CD8-positive, alpha-beta T cell (primary cell): ENCODE measurements at regions of chr16 and their contacts with region 1.

Region 1: DNA sequence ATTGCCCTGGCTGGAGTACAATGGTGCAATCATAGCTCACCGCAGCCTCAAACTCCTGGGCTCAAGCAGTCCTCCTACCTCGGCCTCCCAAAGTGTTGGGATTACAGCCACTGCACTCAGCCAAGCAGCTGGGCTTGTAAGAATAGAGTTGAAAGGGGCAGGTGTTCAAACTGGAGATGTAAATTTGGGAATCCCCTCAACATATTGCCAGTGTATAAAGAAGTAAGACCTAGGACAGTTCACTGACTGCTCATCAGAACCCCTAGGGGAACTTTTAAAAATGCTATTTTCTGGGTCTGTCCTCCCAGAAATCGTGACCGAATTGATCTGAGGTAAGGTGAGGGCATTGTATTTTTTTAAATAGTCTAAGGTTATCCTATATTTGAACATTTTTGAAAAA is 8.9 kb upstream of the DNAJA2 start:
- DNase-seq: no peak
- ATAC-seq: no peak
- H3K4me3 ChIP-seq: no peak overlapping the region
- H3K4me3 Mint-ChIP-seq: no peak overlapping the region
- H3K27ac ChIP-seq: no peak overlapping the region
- H3K27ac Mint-ChIP-seq: no peak overlapping the region
- H3K4me1 ChIP-seq: no peaks in the 10 kb centered on the region
- H3K4me1 Mint-ChIP-seq: no peaks in the 10 kb centered on the region
- H3K27me3 ChIP-seq: no peaks in the 10 kb centered on the region
- H3K27me3 Mint-ChIP-seq: no peaks in the 10 kb centered on the region
- CTCF ChIP-seq: no peak

Region 2: GRCh38 chr16:47028767-47029377 is 46.5 kb after region 1 on chr16:
- CTCF ChIA-PET with region 1: no interaction called
- POLR2A ChIA-PET with region 1: no interaction called
- intact Hi-C with region 1: loop called in 1 of 2 experiments (anchors 5 kb)
- DNase-seq: no peak
- ATAC-seq: no peak
- H3K4me3 ChIP-seq: no peak overlapping the region
- H3K4me3 Mint-ChIP-seq: no peak overlapping the region
- H3K27ac ChIP-seq: no peak overlapping the region
- H3K27ac Mint-ChIP-seq: no peak overlapping the region
- H3K4me1 ChIP-seq: no peaks in the 10 kb centered on the region
- H3K4me1 Mint-ChIP-seq: no peaks in the 10 kb centered on the region
- H3K27me3 ChIP-seq: no peaks in the 10 kb centered on the region
- H3K27me3 Mint-ChIP-seq: no peaks in the 10 kb centered on the region
- CTCF ChIP-seq: no peak